ENCODE measurements at regions of chr6 and their contacts with region 1.

Region 1: GRCh38 chr6:37550191-37550965 is 50.7 kb upstream of the CCDC167 start:
- DNase-seq: no peak
- ATAC-seq: peak in 1 of 4 donors; percentile 16
- H3K4me3 ChIP-seq: no peak overlapping the region
- H3K27ac ChIP-seq: no peak overlapping the region
- H3K4me1 ChIP-seq: peaks cover 0 to 13% (median 2%) of the 10 kb centered on the region in 12 donors
- H3K27me3 ChIP-seq: peaks cover 0 to 10% (median 0%) of the 10 kb centered on the region in 9 donors
- CTCF ChIP-seq: no peak
- POLR2A ChIP-seq: no peak

Region 2: GRCh38 chr6:37560737-37561103 is 10.3 kb after region 1 on chr6:
- intact Hi-C with region 1: loop called in 1 of 10 experiments (anchors 1 kb)
- DNase-seq: no peak
- ATAC-seq: no peak
- H3K4me3 ChIP-seq: no peak overlapping the region
- H3K27ac ChIP-seq: no peak overlapping the region
- H3K4me1 ChIP-seq: peaks cover 0 to 22% (median 5%) of the 10 kb centered on the region in 12 donors
- H3K27me3 ChIP-seq: peaks cover 0 to 9% (median 0%) of the 10 kb centered on the region in 9 donors
- CTCF ChIP-seq: peak in 1 of 12 donors; percentile 5
- POLR2A ChIP-seq: no peak

Region 3: DNA sequence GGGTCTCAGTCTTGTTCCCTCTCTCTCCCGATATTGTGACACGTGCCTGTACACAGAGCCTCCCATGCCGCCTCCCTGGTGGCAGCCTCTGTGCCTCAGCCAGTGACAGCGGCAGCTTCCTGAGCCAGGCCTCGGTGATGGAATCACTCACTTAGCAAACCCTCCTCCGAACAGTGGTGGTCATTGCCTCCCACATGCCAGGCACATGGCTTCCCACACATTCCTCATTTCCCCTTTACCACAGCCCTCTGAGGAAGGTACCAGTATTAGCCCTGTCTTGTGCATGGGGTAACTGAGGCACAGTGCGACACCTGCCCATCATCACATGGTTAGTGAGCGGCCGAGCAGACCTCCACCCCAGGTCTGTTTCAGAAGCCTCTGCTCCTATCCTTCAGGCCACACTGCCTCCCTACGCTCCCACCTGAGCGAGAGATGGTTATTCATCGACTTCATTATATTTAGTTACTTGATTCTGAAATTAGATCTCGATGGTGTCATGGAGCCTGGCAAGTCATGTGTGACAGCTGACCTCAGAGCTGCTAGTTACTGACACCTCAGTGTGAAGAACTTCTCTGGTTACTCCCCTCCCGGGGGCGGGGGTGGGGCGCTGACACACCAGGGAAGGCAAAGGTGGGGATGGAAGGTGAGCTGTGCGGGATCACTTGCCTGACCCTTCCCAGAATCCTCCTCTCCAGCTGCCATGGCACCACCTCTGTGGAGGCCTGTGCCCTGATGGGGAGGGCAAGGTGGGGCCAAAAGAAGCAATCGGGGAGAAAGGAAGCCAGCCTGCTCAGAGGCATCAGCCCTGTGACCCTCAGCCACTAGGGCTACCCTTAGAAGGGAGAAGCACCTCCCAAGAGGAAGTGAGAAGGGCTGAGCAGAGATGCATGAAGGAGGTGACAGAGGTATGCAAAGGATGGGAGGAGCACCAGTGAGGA is 129.4 kb after region 1 on chr6:
- intact Hi-C with region 1: loop called in 1 of 10 experiments (anchors 10 kb)
- DNase-seq: no peak
- ATAC-seq: no peak
- H3K4me3 ChIP-seq: no peak overlapping the region
- H3K27ac ChIP-seq: no peak overlapping the region
- H3K4me1 ChIP-seq: no peaks in the 10 kb centered on the region
- H3K27me3 ChIP-seq: no peaks in the 10 kb centered on the region
- CTCF ChIP-seq: no peak
- POLR2A ChIP-seq: no peak

Region 4: DNA sequence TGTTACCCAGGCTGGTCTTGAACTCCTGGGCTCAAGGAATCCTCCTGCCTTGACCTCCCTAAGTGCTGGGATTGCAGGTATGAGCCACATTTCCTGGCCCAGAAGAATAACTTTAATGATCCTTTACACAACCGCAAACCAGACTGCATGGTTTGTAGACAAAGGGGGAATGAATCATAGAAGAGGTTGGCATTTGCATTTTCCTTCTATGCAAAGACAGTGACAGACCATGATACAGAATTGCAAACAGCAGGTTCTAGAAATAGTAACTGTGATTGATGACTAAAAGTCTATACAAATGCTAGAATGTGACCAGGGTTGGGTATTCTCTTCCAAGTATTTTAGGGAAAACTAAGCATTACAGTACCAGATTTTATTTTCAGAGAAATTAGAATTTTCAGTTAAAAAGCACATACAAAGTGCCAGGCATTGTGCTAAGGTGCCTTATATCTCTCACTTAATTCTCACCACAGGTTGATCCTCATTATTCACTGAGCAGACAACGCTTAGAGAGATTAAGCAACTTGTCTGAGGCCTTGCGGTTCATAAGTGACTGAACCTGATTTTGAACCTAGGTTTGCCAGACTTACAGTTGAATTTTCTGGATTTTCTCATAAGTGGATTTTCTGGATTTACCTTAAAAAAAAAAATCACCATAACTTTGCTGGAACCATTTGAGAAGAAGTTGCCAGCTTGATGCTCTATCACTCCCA is 415.7 kb after region 1 on chr6:
- intact Hi-C with region 1: no loop called
- DNase-seq: no peak
- ATAC-seq: no peak
- H3K4me3 ChIP-seq: no peak overlapping the region
- H3K27ac ChIP-seq: no peak overlapping the region
- H3K4me1 ChIP-seq: peaks cover 0 to 17% (median 0%) of the 10 kb centered on the region in 12 donors
- H3K27me3 ChIP-seq: no peaks in the 10 kb centered on the region
- CTCF ChIP-seq: no peak
- POLR2A ChIP-seq: no peak

Region 5: GRCh38 chr6:38279420-38279819 is 729.0 kb after region 1 on chr6:
- intact Hi-C with region 1: no loop called
- DNase-seq: no peak
- ATAC-seq: no peak
- H3K4me3 ChIP-seq: no peak overlapping the region
- H3K27ac ChIP-seq: no peak overlapping the region
- H3K4me1 ChIP-seq: peaks cover 0 to 19% (median 4%) of the 10 kb centered on the region in 12 donors
- H3K27me3 ChIP-seq: no peaks in the 10 kb centered on the region
- CTCF ChIP-seq: peak in 5 of 12 donors; percentile 18 to 26 (median 20)
- POLR2A ChIP-seq: no peak

Measured in heart left ventricle (tissue), 16 donors.